ENCODE measurements at regions of chr1 and their contacts with region 1.

Region 1: GRCh38 chr1:165367375-165367993 is 11.0 kb upstream of the LMX1A start:
- DNase-seq: peak; percentile 75 to 85 (median 80)
- H3K4me3 ChIP-seq: no peak overlapping the region
- H3K27ac ChIP-seq: no peak overlapping the region
- H3K4me1 ChIP-seq: peaks cover 0 to 6% (median 0%) of the 10 kb centered on the region in 4 experiments
- H3K27me3 ChIP-seq: peaks cover 2 to 85% (median 20%) of the 10 kb centered on the region in 5 experiments

Region 2: GRCh38 chr1:163747261-163747660 is 1620.2 kb before region 1 on chr1:
- CTCF ChIA-PET with region 1: no interaction called
- POLR2A ChIA-PET with region 1: no interaction called
- DNase-seq: no peak
- H3K4me3 ChIP-seq: no peak overlapping the region
- H3K27ac ChIP-seq: no peak overlapping the region
- H3K4me1 ChIP-seq: no peaks in the 10 kb centered on the region
- H3K27me3 ChIP-seq: no peaks in the 10 kb centered on the region

Region 3: GRCh38 chr1:165352442-165353293 is 14.8 kb before region 1 on chr1:
- CTCF ChIA-PET with region 1: interaction called, 57 read pairs
- POLR2A ChIA-PET with region 1: no interaction called
- DNase-seq: peak in 1 of 3 donors; percentile 26
- H3K4me3 ChIP-seq: peak overlapping the region in 1 of 7 experiments; percentile 17
- H3K27ac ChIP-seq: no peak overlapping the region
- H3K4me1 ChIP-seq: peaks cover 0 to 36% (median 17%) of the 10 kb centered on the region in 4 experiments
- H3K27me3 ChIP-seq: peaks cover 20 to 99% (median 73%) of the 10 kb centered on the region in 5 experiments

Region 4: DNA sequence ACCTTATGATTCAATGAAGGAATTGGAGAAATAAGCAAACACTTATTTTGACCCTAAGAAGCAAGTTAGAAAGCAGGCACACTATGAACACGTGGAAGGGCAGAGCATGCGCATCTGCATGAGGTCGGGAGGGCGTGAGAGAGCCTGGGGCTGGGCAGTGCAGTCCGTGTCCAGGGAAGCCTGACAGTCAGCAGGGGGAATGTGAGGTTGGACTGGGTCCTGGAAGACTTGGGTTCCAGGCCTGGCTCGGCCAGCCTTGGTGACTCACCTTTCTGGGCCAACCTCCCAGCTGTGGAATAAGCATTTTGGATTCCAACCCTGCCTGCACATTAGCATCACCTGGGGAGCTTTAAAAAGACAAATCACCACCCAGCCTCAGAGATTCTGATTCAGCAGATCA is 15.6 kb after region 1 on chr1:
- CTCF ChIA-PET with region 1: interaction called, 53 read pairs
- POLR2A ChIA-PET with region 1: no interaction called
- DNase-seq: no peak
- H3K4me3 ChIP-seq: no peak overlapping the region
- H3K27ac ChIP-seq: no peak overlapping the region
- H3K4me1 ChIP-seq: no peaks in the 10 kb centered on the region
- H3K27me3 ChIP-seq: peaks cover 9 to 90% (median 47%) of the 10 kb centered on the region in 5 experiments

Region 5: DNA sequence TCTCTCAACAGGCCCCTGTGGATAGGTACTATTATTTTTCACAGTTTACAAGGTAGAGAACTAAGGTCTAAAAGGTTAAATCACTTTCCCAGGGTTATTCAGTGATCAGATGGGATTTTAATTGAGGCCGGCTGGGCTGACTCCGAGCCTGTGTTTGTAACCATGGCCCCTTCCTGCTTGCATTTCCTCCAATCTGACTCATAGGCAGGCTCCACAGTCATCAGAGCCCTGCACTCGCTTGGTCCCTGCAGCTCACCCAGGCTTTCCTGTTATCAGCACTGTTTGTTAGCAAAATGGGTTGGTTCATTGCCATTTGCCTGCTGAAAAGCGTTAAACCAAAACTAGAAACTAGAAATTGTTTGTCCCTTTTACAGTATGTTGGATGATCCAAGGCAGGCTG is 30.5 kb after region 1 on chr1:
- CTCF ChIA-PET with region 1: interaction called, 52 read pairs
- POLR2A ChIA-PET with region 1: no interaction called
- DNase-seq: peak; percentile 55 to 86 (median 83)
- H3K4me3 ChIP-seq: no peak overlapping the region
- H3K27ac ChIP-seq: no peak overlapping the region
- H3K4me1 ChIP-seq: peaks cover 0 to 16% (median 10%) of the 10 kb centered on the region in 4 experiments
- H3K27me3 ChIP-seq: peaks cover 3 to 89% (median 54%) of the 10 kb centered on the region in 5 experiments

Region 6: DNA sequence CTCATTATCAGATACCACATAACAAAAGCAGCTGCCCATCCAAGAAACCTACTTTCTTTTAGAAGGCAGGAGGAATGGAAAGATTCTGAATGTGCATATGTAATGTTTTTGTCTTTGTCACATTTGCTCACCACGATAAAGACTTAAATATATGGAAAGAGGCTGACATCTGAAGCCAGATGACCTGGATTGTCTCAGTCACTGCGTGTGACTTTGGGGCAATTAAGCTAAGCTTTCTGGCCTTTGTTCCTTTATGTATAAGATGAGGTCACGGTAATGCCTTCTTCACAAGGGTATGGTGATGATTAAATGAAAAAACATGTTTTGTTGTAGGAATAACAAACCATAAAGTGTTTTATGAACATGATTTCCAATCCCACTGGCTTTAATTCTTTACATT is 219.0 kb after region 1 on chr1:
- CTCF ChIA-PET with region 1: interaction called, 22 read pairs
- POLR2A ChIA-PET with region 1: no interaction called
- DNase-seq: no peak
- H3K4me3 ChIP-seq: no peak overlapping the region
- H3K27ac ChIP-seq: no peak overlapping the region
- H3K4me1 ChIP-seq: no peaks in the 10 kb centered on the region
- H3K27me3 ChIP-seq: peaks cover 14 to 60% (median 32%) of the 10 kb centered on the region in 5 experiments

Region 7: DNA sequence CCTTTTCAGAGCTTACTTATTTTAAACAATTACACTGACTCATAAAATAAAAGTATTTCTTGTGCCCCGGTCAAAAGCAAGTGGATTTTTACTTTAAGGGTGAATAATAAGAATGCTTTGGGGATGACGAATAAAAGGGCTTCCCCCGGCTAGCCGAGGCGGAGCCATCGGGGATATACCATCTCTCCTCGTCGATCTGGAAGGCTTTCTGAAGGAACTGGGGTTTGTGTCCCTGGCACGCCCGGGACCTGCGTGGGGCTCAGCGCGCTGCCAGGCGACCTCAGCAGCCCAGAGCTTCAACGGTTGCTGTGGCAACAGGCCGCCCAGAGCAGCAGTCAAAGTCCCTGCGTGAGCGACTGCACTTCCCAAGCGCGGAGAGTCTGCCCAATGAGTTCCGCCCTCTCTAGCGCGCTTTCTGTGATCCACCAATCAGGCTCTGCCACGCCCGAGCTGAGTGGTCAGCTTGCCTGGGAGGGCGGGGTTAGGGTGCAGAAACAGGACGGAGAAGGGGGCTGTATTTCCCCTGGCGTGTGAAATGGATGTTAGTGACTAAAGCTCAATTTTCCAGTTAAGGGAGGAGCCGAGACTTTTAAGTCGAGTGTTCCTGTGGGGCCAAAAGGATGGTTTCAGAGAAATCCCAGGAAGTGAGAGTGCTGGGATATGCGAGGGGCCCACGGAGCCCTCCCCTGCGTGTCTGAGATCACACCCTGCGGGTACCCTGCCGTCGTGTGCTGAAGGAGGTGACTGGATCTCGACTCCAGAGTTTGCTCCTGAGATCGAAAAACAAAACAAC is 230.6 kb after region 1 on chr1:
- CTCF ChIA-PET with region 1: interaction called, 22 read pairs
- POLR2A ChIA-PET with region 1: interaction called, 7 read pairs
- DNase-seq: peak; percentile 95 to 98 (median 96)
- H3K4me3 ChIP-seq: peak overlapping the region in 6 of 7 experiments; percentile 63 to 80 (median 72)
- H3K27ac ChIP-seq: peak overlapping the region; percentile 77 to 85
- H3K4me1 ChIP-seq: peaks cover 0 to 16% (median 15%) of the 10 kb centered on the region in 4 experiments
- H3K27me3 ChIP-seq: peaks cover 11 to 45% (median 23%) of the 10 kb centered on the region in 5 experiments

Measured in common myeloid progenitor, CD34-positive (primary cell).